Mammary epithelial cell (primary cell): ENCODE measurements at regions of chr3 and their contacts with region 1.

Region 1: GRCh38 chr3:40043444-40043755 is 234.0 kb downstream of the MYRIP start:
- DNase-seq: peak; percentile 86
- H3K4me3 ChIP-seq: no peak overlapping the region
- H3K27ac ChIP-seq: peak overlapping the region; percentile 7
- H3K4me1 ChIP-seq: peaks cover 29% of the 10 kb centered on the region
- H3K27me3 ChIP-seq: no peaks in the 10 kb centered on the region
- CTCF ChIP-seq: no peak

Region 2: DNA sequence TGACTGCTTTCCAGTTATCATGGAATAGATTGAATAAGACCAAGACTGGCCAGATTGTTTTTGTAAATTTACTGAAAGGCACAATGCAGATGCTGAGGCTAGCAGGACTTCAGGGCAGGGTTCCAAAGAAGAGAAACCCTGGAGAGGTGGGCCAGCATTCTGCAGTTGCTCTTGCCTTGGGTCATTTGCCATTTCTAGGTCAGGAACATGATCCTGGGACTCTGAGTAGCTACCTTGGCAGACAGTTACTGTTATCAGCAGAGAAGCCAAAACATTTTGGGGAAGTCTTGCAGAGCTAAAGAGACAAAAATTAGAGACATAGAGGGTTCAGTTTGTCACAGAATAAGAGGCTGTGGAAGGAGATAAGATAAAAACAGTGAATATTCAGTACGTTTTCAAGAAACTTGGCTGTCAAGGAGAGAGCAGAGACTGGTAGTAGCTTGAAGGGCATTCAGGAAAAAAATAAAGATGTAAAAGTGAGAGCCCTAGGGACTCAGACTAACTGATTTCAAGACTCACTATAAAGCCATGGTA is 280.8 kb before region 1 on chr3:
- CTCF ChIA-PET with region 1: no interaction called
- dilution Hi-C with region 1: no loop called
- in situ Hi-C with region 1: no loop called
- intact Hi-C with region 1: no loop called
- DNase-seq: no peak
- H3K4me3 ChIP-seq: no peak overlapping the region
- H3K27ac ChIP-seq: no peak overlapping the region
- H3K4me1 ChIP-seq: no peaks in the 10 kb centered on the region
- H3K27me3 ChIP-seq: peaks cover 2% of the 10 kb centered on the region
- CTCF ChIP-seq: no peak

Region 3: GRCh38 chr3:40079203-40079846 is 35.9 kb after region 1 on chr3:
- CTCF ChIA-PET with region 1: no interaction called
- dilution Hi-C with region 1: no loop called
- in situ Hi-C with region 1: no loop called
- intact Hi-C with region 1: loop called (anchors 1 kb)
- DNase-seq: peak; percentile 43
- H3K4me3 ChIP-seq: no peak overlapping the region
- H3K27ac ChIP-seq: no peak overlapping the region
- H3K4me1 ChIP-seq: peaks cover 18% of the 10 kb centered on the region
- H3K27me3 ChIP-seq: no peaks in the 10 kb centered on the region
- CTCF ChIP-seq: no peak

Region 4: DNA sequence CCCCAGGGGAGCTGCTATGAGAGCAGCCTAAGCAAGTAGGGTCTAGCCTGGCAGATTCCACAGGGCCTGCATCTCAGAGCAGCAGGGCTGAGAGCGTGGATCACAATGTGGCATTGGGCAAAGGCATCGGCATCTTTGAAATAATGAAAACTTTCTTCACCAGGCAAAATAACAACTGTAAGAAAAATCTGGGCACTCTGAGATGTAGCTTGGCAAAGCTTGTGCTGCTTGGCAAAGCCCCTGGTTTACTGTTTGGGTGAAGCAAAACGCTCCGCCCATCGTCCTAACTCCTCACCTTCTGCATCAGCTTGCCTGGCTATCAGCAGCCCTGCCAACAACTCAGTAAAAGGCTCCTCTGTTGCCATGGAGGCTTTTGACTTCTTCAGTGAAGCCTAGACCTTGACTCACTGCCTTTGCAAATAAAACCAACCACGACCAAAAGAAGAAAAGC is 53.3 kb after region 1 on chr3:
- CTCF ChIA-PET with region 1: no interaction called
- dilution Hi-C with region 1: no loop called
- in situ Hi-C with region 1: no loop called
- intact Hi-C with region 1: loop called (anchors 1 kb)
- DNase-seq: peak; percentile 78
- H3K4me3 ChIP-seq: no peak overlapping the region
- H3K27ac ChIP-seq: peak overlapping the region; percentile 88
- H3K4me1 ChIP-seq: peaks cover 32% of the 10 kb centered on the region
- H3K27me3 ChIP-seq: no peaks in the 10 kb centered on the region
- CTCF ChIP-seq: no peak

Region 5: DNA sequence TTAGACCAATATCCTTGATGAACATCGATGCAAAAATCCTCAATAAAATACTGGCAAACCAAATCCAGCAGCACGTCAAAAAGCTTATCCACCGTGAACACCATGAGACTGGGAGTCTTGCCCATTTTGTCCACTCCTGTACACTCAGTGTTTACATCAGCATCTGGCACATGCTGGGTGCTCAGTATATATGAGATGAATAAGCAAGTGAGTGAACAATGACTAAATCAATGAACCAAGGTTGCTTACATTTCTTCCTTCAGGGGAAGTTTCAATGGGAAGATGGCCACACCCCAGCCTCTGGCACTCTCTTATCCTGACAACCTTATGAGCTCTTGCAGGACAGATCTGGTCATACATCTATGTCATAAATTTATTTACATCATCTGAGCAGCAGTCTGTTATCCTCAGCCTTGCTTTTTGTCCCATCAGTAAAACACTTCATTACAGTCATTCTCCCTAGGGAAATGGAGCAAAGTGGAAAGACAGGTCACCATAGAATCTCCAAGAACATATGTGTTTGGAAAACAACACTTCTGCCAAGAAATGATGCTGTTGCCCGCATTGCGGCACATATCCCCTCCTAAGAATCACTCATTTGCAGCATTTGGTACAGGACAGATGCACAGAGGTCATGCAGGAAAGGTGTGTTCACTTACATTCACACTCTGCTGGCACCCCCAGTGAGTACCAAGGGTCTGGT is 94.3 kb after region 1 on chr3:
- CTCF ChIA-PET with region 1: no interaction called
- dilution Hi-C with region 1: no loop called
- in situ Hi-C with region 1: no loop called
- intact Hi-C with region 1: loop called (anchors 2 kb)
- DNase-seq: peak; percentile 86
- H3K4me3 ChIP-seq: no peak overlapping the region
- H3K27ac ChIP-seq: no peak overlapping the region
- H3K4me1 ChIP-seq: no peaks in the 10 kb centered on the region
- H3K27me3 ChIP-seq: no peaks in the 10 kb centered on the region
- CTCF ChIP-seq: no peak